ENCODE measurements at regions of chr2 and their contacts with region 1.

Region 1: DNA sequence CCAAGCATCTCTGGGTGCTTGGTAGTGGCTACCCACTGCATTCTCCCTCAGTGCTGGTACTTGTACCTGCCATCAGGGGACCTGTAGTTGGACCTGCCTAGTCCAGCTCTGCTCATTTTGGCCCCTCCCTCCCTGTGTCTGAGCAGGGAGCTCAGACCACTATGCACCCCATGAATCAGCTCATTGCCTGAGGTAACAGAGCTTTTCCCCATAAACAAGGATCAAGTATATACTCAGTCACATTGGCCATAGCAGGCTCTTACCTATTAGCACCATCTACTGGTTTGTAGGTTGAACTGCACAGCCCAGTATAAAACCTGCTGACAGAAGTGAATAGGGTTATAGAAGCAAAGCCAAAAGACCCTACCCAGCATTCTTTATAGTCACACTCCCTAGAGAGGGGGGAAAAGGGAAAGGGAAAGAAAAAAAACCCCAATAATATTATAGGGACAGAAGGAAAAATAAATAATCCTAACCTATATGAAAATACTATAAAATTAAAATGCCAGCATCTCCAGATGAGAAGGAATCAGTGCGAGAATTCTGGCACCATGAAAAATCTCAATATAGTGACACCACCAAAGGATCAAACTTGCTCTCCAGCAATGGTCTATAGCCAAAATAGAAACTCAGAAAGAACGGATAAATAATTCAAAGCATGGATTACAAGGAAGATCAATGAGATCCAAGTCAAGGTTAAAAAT is 6.9 kb upstream of the FLACC1 start:
- DNase-seq: peak; percentile 35 to 61 (median 56)
- H3K4me3 ChIP-seq: no peak overlapping the region
- H3K4me3 Mint-ChIP-seq: no peak overlapping the region
- H3K27ac ChIP-seq: peak overlapping the region in 1 of 2 donors; percentile 4
- H3K27ac Mint-ChIP-seq: peak overlapping the region in 2 of 7 donors; percentile 16 to 34
- H3K4me1 ChIP-seq: no peaks in the 10 kb centered on the region
- H3K4me1 Mint-ChIP-seq: peaks cover 2% of the 10 kb centered on the region
- H3K27me3 ChIP-seq: no peaks in the 10 kb centered on the region
- H3K27me3 Mint-ChIP-seq: peaks cover 0 to 2% (median 0%) of the 10 kb centered on the region in 3 donors
- CTCF ChIP-seq: peak; percentile 91

Region 2: GRCh38 chr2:201275990-201276389 is 88.0 kb before region 1 on chr2:
- intact Hi-C with region 1: loop called in 1 of 2 experiments (anchors 10 kb)
- DNase-seq: no peak
- H3K4me3 ChIP-seq: no peak overlapping the region
- H3K4me3 Mint-ChIP-seq: no peak overlapping the region
- H3K27ac ChIP-seq: no peak overlapping the region
- H3K27ac Mint-ChIP-seq: peak overlapping the region in 1 of 7 donors; percentile 47
- H3K4me1 ChIP-seq: peaks cover 0 to 12% of the 10 kb centered on the region in 2 donors
- H3K4me1 Mint-ChIP-seq: peaks cover 17% of the 10 kb centered on the region
- H3K27me3 ChIP-seq: no peaks in the 10 kb centered on the region
- H3K27me3 Mint-ChIP-seq: peaks cover 0 to 3% (median 0%) of the 10 kb centered on the region in 3 donors
- CTCF ChIP-seq: peak; percentile 13

Measured in CD14-positive monocyte (primary cell).